ENCODE measurements at regions of chr22 and their contacts with region 1.

Region 1: GRCh38 chr22:36946421-36947158 is 33.2 kb downstream of the CSF2RB start:
- DNase-seq: no peak
- ATAC-seq: peak; percentile 68
- H3K4me3 ChIP-seq: no peak overlapping the region
- H3K27ac ChIP-seq: no peak overlapping the region
- H3K4me1 ChIP-seq: peaks cover 16% of the 10 kb centered on the region
- H3K27me3 ChIP-seq: no peaks in the 10 kb centered on the region
- CTCF ChIP-seq: peak in 2 of 3 experiments; percentile 21 to 39; a peak in 5 of 6 replicates
- EP300 ChIP-seq: no peak
- POLR2A ChIP-seq: no peak
- RAD21 ChIP-seq: peak; percentile 51

Region 2: GRCh38 chr22:36644333-36644757 is 302.2 kb before region 1 on chr22:
- CTCF ChIA-PET with region 1: no interaction called
- POLR2A ChIA-PET with region 1: no interaction called
- RAD21 ChIA-PET with region 1: no interaction called
- SMC1A ChIA-PET with region 1: no interaction called
- in situ Hi-C with region 1: no loop called
- intact Hi-C with region 1: no loop called
- DNase-seq: no peak
- ATAC-seq: peak; percentile 27; the same call in 1 of the 3 replicates
- H3K4me3 ChIP-seq: no peak overlapping the region
- H3K27ac ChIP-seq: no peak overlapping the region
- H3K4me1 ChIP-seq: no peaks in the 10 kb centered on the region
- H3K27me3 ChIP-seq: no peaks in the 10 kb centered on the region; a peak in 2 of 4 replicates
- CTCF ChIP-seq: no peak
- EP300 ChIP-seq: no peak
- POLR2A ChIP-seq: no peak
- RAD21 ChIP-seq: no peak

Region 3: DNA sequence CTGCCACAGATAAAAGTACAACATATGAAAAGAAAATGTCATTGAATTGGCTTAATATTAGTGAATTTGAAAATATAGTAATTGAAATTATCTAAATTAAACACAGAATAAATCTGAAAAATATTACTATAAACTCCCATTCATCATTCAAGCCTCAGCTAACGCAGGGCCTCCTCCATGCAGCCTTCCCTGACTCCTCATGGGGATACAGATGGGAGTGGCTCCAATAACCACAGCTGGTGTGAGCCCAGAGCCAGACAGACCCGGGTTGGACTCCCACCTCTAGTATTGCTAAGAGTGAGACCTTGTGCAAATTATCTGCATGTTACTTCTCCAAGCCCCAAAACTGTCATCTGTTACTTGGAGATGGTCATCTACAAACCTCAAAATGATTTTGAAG is 11.8 kb after region 1 on chr22:
- CTCF ChIA-PET with region 1: interaction called, 12 read pairs
- POLR2A ChIA-PET with region 1: no interaction called
- RAD21 ChIA-PET with region 1: no interaction called
- SMC1A ChIA-PET with region 1: interaction called, 5 read pairs
- in situ Hi-C with region 1: no loop called
- intact Hi-C with region 1: no loop called
- DNase-seq: no peak
- ATAC-seq: no peak
- H3K4me3 ChIP-seq: no peak overlapping the region
- H3K27ac ChIP-seq: no peak overlapping the region
- H3K4me1 ChIP-seq: peaks cover 17% of the 10 kb centered on the region
- H3K27me3 ChIP-seq: peaks cover 0 to 3% of the 10 kb centered on the region in 2 experiments; a peak in 2 of 4 replicates
- CTCF ChIP-seq: no peak
- EP300 ChIP-seq: no peak
- POLR2A ChIP-seq: no peak
- RAD21 ChIP-seq: no peak

Region 4: DNA sequence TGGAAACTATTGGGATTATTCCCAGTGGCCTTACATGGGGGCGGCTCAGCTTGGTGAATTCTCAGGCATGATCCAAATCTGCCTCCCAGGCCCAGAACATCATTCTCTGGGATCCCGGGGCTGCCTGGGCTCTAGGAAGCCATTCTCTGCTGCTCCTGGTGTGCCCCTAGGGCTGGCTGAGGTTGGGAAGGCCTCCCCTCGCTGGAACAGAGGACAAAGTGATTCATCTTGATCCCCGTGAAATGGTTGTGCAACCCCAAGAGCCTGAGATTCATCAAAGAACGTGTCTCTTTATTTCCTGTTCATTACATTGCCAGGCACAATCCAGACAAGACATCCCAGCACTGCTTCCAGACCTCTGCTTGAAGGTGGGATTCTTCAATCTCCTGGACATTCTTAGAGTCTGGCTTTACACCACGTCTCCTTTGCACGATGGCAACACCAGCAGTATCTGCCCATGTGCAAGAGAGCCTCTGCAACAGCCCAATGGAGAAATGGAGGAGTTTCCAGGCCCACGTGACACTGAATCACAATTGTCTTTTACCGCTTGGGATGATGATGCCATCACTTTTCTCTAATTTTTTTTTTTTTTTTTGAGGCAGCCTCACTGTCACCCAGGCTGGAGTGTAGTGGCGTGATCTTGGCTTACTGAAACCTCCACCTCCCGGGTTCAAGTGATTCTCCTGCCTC is 20.4 kb after region 1 on chr22:
- CTCF ChIA-PET with region 1: interaction called, 12 read pairs
- POLR2A ChIA-PET with region 1: interaction called, 3 read pairs
- RAD21 ChIA-PET with region 1: no interaction called
- SMC1A ChIA-PET with region 1: interaction called, 5 read pairs
- in situ Hi-C with region 1: no loop called
- intact Hi-C with region 1: no loop called
- DNase-seq: no peak
- ATAC-seq: no peak
- H3K4me3 ChIP-seq: no peak overlapping the region
- H3K27ac ChIP-seq: no peak overlapping the region
- H3K4me1 ChIP-seq: no peaks in the 10 kb centered on the region
- H3K27me3 ChIP-seq: no peaks in the 10 kb centered on the region
- CTCF ChIP-seq: no peak
- EP300 ChIP-seq: no peak
- POLR2A ChIP-seq: no peak
- RAD21 ChIP-seq: no peak

Measured in GM12878 (cell line).